Activated CD4-positive, alpha-beta T cell treated with anti-CD3 and anti-CD28 coated beads, Interleukin-2, amount 10 ng/mL, durations not matched to agents 24 days and 14 days (primary cell): ENCODE measurements at regions of chr3 and their contacts with region 1.

Region 1: DNA sequence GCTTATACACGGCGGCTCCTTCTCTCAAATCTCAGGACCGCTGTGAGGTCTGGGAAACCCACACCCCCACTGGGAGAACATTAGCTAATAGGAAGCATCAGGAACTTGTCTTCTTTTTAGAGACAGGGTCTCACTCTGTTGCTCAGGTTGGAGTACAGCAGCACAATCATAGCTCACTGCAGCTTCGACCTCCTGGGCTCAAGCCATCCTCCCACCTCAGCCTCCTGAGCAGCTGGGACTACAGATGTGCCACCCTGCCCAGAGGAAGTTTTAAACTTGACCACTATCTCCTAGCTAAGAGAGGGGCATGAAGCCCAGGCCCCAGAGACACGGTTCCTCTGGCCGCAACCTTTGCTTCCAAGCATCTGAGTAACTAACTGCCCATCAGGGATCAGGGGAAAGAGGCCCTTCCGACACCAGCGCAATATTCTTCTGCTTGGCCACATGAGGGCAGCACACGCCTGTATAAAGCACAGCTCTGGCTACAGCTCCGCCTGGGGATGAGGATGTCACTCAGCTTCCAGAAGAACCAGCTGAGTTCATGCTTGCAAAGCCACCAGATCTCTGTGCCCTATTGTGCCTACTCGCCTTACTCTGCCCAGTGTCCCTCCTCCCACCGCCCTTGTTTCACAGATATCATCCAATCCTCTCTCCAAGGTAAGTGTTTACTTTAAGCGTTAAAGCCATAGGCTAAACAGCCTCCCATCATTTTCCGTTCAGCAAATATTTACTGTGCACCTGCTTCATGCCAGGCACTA is 57.5 kb upstream of the SLC6A11 start:
- DNase-seq: peak; percentile 80
- H3K4me3 Mint-ChIP-seq: no peak overlapping the region
- H3K27ac Mint-ChIP-seq: no peak overlapping the region
- H3K4me1 Mint-ChIP-seq: peaks cover 3% of the 10 kb centered on the region
- H3K27me3 Mint-ChIP-seq: peaks cover 12% of the 10 kb centered on the region

Region 2: DNA sequence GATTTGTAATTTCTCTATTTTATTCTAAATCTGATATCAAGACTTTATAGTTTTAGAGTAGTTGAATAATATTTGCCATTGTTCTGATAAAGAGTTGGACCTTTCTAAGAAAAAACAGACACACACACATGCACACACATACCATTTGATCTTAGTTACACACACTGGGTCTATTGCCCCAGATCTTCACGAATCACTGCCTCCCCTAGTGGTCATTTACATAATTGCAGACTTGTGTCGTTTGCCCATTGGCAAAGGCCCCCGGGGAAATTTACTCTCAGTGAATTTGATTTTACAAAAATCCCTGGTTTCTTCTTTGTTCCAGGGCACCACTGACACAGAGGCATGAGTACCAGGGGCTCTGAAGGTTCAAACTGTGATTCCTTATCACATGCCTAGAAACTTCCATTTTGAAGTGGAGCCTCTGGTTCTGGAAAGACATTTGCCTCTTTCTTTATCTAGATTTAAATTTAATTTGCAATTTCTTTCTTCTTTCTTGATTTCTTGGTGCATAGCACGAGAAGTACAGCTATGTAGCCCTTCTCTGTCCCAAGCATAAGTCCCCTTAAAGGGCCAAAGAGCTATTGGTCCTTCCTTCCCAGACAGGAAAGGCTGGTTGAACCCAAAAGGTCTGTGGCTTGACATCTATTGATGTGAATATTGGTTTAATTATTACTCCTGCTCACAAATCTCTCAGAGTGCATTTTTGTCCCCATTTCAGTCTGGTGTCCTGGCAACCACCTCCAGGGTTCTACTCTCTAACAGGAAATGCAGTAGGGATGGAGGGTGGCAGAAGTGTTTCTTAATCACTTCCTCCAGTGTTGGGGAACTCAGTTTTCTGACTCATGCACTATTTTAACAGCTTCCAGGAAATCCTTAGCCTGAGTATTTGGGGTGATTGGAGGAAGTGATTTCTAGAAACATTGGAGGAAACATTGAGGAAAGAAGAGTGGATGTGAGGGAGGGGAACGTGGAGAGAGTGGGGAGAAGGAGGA is 25.2 kb after region 1 on chr3:
- intact Hi-C with region 1: loop called (anchors 2 kb)
- DNase-seq: peak; percentile 79
- H3K4me3 Mint-ChIP-seq: no peak overlapping the region
- H3K27ac Mint-ChIP-seq: no peak overlapping the region
- H3K4me1 Mint-ChIP-seq: no peaks in the 10 kb centered on the region
- H3K27me3 Mint-ChIP-seq: peaks cover 11% of the 10 kb centered on the region

Region 3: GRCh38 chr3:10883478-10884234 is 125.2 kb after region 1 on chr3:
- intact Hi-C with region 1: loop called (anchors 5 kb)
- DNase-seq: no peak
- H3K4me3 Mint-ChIP-seq: no peak overlapping the region
- H3K27ac Mint-ChIP-seq: no peak overlapping the region
- H3K4me1 Mint-ChIP-seq: no peaks in the 10 kb centered on the region
- H3K27me3 Mint-ChIP-seq: no peaks in the 10 kb centered on the region

Region 4: GRCh38 chr3:10983219-10983916 is 224.9 kb after region 1 on chr3:
- intact Hi-C with region 1: loop called (anchors 1 kb)
- DNase-seq: peak; percentile 70
- H3K4me3 Mint-ChIP-seq: no peak overlapping the region
- H3K27ac Mint-ChIP-seq: no peak overlapping the region
- H3K4me1 Mint-ChIP-seq: no peaks in the 10 kb centered on the region
- H3K27me3 Mint-ChIP-seq: peaks cover 14% of the 10 kb centered on the region